HepG2 (cell line): ENCODE measurements at regions of chr5 and their contacts with region 1.

Region 1: GRCh38 chr5:132495667-132496190 is 5.2 kb upstream of the IRF1 start:
- DNase-seq: peak; percentile 85
- ATAC-seq: peak; percentile 81
- H3K4me3 ChIP-seq: peak overlapping the region; percentile 73 to 91 (median 88)
- H3K27ac ChIP-seq: peak overlapping the region; percentile 81
- H3K4me1 ChIP-seq: peaks cover 62% of the 10 kb centered on the region
- H3K27me3 ChIP-seq: no peaks in the 10 kb centered on the region
- CTCF ChIP-seq: peak; percentile 17; the same call in 1 of the 2 replicates
- EP300 ChIP-seq: peak; percentile 6 to 23; a peak in 1 of 4 replicates
- POLR2A ChIP-seq: peak in 1 of 2 experiments; percentile 68; a peak in 2 of 4 replicates
- RAD21 ChIP-seq: peak; percentile 26; the same call in 1 of the 2 replicates

Region 2: DNA sequence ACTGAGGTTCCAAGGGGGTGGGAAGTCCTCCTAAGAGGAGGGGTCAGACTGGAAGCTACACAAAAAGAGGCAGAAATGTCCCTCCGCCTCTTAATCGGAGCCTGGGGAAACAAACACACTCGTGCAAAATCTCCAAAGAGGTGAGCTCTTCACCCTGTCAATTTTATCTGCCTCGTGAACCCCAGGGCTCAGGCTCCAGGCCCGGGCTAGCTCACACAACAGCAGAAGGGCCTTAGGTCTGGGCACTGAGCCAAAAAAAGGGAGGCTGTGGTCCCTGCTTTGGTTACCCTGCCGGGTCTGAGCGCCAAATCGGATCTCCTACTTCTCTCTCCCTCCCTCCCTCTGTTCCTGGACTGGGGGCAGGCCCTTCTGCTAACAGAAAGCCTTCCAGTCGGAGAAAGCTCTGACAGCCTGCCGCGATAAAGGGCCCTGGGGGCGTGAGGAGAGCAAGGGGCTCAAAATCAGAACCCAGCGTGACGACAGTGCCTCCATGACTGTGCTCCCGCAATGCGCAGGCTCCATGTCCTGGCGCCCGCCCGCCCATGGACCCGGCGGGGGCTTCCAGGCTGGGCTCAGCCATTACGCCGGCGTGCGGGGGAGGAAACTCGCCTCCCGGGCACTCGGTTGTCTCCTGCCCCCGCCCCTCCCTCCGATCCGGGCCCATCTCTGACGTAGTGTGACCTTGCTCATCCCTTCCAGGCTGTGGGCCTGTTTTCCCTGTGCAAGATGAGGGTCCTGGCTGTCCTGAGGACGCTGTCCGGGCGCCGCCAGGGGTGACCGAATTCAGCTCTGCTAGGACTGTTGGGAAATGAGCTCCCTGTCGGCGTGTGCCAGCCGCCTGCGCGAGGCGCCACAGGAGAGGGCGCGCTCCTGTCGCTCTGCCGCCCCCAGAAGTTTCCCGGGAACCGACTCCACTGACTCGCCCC is 202.4 kb before region 1 on chr5:
- CTCF ChIA-PET with region 1: no interaction called
- POLR2A ChIA-PET with region 1: interaction called, 16 read pairs
- in situ Hi-C with region 1: loop called (anchors 10 kb)
- intact Hi-C with region 1: no loop called
- DNase-seq: peak; percentile 82
- ATAC-seq: peak; percentile 84
- H3K4me3 ChIP-seq: peak overlapping the region; percentile 51 to 79 (median 55)
- H3K27ac ChIP-seq: peak overlapping the region; percentile 92
- H3K4me1 ChIP-seq: peaks cover 27% of the 10 kb centered on the region
- H3K27me3 ChIP-seq: no peaks in the 10 kb centered on the region; a peak in 2 of 5 replicates
- CTCF ChIP-seq: peak; percentile 43
- EP300 ChIP-seq: no peak
- POLR2A ChIP-seq: peak; percentile 57 to 79
- RAD21 ChIP-seq: no peak; the same call in 1 of the 2 replicates

Region 3: GRCh38 chr5:132354381-132355139 is 141.2 kb before region 1 on chr5:
- CTCF ChIA-PET with region 1: no interaction called
- POLR2A ChIA-PET with region 1: no interaction called
- in situ Hi-C with region 1: no loop called
- intact Hi-C with region 1: no loop called
- DNase-seq: no peak
- ATAC-seq: no peak
- H3K4me3 ChIP-seq: no peak overlapping the region
- H3K27ac ChIP-seq: no peak overlapping the region
- H3K4me1 ChIP-seq: peaks cover 8% of the 10 kb centered on the region; the same call in 1 of the 2 replicates
- H3K27me3 ChIP-seq: no peaks in the 10 kb centered on the region
- CTCF ChIP-seq: no peak
- EP300 ChIP-seq: no peak
- POLR2A ChIP-seq: no peak
- RAD21 ChIP-seq: no peak

Region 4: DNA sequence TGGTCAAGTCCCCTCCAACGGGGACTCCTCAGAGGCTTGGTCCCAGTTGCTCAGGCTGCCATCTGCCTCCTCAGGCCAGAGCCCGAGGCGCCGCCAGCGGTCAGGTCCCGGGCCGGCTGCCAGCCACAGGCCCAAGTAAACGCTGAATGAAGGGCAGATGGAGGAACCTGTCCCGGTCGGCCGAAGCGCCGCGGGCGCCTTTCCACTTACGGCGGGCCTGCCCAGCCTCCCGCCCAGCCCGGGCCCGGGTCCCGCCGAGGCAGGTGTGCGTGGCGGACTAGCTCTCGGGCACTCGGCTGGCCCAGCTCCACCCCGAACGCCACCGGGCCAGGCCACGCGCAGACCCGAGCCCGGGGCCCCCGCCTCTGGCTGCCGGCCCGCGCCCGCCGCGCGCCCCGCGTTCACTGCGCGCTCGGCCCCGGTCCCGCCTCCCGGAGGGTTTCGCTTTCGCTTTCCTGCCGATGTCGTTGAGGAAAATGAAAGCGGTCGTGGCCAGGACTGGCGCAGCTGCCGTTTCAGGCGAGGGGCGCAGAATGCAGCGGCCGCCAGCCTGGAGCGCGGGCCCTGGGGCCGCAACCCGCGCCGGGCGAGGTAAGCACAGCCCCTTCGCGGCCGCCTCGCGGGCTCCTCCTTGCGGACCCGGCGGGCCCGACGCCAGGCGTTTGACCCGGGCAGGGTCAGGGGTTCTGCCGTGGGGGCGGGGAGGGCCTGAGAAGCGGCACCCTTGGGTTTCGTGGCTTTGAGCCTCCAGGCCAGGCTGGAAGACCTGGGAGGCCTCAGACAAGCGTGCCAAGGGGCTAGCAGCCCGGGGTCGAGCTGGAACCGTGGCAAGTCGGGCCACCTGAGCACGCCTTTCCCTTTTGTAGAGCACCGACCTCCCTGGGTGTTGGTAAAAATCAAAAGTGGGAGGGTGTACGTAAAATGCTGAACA is 85.0 kb before region 1 on chr5:
- CTCF ChIA-PET with region 1: no interaction called
- POLR2A ChIA-PET with region 1: interaction called, 31 read pairs
- in situ Hi-C with region 1: no loop called
- intact Hi-C with region 1: no loop called
- DNase-seq: peak; percentile 60
- ATAC-seq: peak; percentile 93
- H3K4me3 ChIP-seq: peak overlapping the region; percentile 63 to 81 (median 74)
- H3K27ac ChIP-seq: peak overlapping the region; percentile 88
- H3K4me1 ChIP-seq: peaks cover 67% of the 10 kb centered on the region
- H3K27me3 ChIP-seq: no peaks in the 10 kb centered on the region; a peak in 1 of 5 replicates
- CTCF ChIP-seq: peak; percentile 80
- EP300 ChIP-seq: peak in 1 of 2 experiments; percentile 24; a peak in 1 of 4 replicates
- POLR2A ChIP-seq: peak; percentile 70 to 77
- RAD21 ChIP-seq: peak; percentile 91

Region 5: DNA sequence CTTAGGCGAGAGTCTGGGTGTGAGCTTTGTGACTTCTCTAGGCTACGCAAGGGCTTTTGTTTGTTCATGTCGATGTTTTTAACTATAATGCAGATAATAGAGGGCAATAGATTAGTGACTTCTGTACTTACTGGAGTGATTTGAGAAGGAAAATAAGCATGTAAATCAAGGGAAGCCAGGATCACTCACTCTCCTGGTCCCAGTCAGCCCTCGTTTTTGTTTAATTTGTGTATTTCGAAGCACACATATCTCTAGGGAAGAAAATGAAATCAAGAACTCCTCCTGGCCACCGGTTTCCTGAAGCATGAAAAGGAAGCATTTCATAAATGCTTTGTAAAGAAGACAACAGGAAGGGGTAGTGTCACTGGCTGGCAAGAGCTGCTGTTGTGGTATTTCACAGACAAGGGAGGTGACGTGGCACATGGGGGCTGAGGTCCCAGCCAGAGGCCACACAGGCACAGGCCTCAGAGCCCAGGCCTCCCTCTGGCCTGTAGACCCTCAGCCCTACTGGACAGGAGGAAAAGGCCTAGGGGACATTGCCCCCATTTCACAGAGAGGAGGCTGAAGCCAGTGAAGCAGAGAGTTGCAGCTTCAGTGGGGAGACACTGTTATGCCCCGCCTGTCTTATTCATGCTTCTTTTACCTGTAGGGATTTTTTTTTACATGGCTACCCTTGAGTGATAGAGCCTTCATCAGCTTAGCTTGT is 39.3 kb before region 1 on chr5:
- CTCF ChIA-PET with region 1: no interaction called
- POLR2A ChIA-PET with region 1: interaction called, 59 read pairs
- in situ Hi-C with region 1: no loop called
- intact Hi-C with region 1: loop called (anchors 5 kb)
- DNase-seq: no peak
- ATAC-seq: peak; percentile 44
- H3K4me3 ChIP-seq: peak overlapping the region in 2 of 3 experiments; percentile 9 to 39; a peak in 1 of 6 replicates
- H3K27ac ChIP-seq: peak overlapping the region; percentile 37
- H3K4me1 ChIP-seq: peaks cover 68% of the 10 kb centered on the region
- H3K27me3 ChIP-seq: no peaks in the 10 kb centered on the region; a peak in 1 of 5 replicates
- CTCF ChIP-seq: no peak
- EP300 ChIP-seq: no peak
- POLR2A ChIP-seq: no peak
- RAD21 ChIP-seq: no peak

Region 6: DNA sequence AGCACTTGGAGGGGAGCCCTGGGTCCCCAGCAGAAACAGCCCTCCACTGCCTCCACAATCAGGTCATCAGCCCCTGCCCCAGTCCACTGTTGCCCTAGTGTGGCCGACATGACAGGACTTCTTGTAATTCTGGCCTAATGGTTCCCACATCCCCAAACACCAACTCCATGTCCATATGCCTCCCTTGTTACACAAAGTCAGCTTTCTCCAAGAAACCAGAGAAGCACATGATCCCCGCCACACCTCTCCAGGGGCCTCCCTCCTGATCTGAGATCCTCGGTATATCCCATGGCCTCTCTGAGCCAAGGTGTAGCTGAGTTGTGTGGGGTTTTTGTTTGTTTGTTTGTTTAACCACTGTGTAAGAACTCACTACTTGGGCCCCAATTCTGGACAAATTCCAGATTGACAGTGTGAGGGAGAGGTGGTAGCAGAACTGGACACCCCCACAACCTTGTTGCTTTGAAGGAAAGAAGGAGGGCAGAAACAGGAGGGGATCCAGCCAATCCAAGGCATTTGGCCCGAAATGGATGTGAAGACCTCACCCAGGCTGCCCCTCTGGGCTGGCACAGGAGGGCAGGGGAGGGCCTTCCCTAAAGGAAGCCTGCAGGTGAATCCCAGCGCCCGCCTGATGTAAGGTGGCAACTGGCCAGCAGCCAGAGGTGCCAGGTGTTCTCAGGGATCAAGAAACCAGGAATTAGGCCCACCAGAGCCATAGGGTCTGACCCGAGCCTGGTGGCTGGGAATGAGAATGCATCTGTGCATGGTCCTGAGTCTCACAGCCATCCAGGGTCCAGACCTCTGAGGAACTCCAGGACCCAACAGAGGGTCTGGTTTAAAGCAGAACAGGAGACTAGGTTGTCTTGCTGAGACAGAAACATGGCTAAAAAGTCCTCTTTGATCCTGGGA is 18.6 kb before region 1 on chr5:
- CTCF ChIA-PET with region 1: no interaction called
- POLR2A ChIA-PET with region 1: interaction called, 99 read pairs
- in situ Hi-C with region 1: no loop called
- intact Hi-C with region 1: loop called (anchors 2 kb)
- DNase-seq: no peak
- ATAC-seq: peak; percentile 66
- H3K4me3 ChIP-seq: no peak overlapping the region
- H3K27ac ChIP-seq: peak overlapping the region; percentile 12
- H3K4me1 ChIP-seq: peaks cover 61% of the 10 kb centered on the region
- H3K27me3 ChIP-seq: no peaks in the 10 kb centered on the region
- CTCF ChIP-seq: no peak
- EP300 ChIP-seq: no peak
- POLR2A ChIP-seq: no peak
- RAD21 ChIP-seq: peak; percentile 29; the same call in 1 of the 2 replicates

Region 7: DNA sequence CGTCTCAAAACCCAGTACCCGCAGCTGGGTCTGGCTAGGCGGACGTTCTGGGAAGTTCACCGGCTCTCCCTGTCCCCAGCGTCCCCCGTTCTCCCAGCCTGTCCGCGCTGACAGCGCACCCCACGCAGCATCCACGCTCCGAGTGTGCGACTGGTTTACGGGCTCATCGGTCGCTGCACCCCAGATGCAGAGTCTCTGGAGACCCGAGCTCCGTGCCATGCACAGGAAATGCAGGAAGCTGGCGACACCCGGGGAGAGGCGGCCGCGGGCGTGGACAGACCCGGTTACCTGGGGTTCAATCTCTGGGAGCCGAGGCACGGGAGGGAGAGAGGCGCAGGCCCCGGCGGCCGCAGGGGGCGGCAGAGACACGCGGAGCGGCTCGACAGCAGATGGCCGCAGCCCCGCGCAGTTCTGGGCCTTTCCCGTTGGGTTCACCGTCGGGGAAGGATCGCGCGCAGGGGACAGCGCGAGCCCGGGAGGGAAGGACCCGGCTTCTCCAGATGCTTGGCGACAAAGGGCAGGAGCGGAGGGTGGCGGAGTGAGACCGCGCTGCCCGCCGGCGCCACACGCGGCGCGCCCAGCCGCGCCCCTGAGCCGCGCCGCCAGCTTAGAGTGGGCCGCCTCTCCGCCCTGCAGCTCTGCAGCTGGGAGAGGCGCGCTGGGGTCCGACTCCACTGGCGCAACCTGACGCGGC is 334.2 kb after region 1 on chr5:
- CTCF ChIA-PET with region 1: no interaction called
- POLR2A ChIA-PET with region 1: no interaction called
- in situ Hi-C with region 1: no loop called
- intact Hi-C with region 1: no loop called
- DNase-seq: peak; percentile 56
- ATAC-seq: peak; percentile 87
- H3K4me3 ChIP-seq: peak overlapping the region; percentile 79 to 94 (median 93)
- H3K27ac ChIP-seq: peak overlapping the region; percentile 90
- H3K4me1 ChIP-seq: peaks cover 61% of the 10 kb centered on the region
- H3K27me3 ChIP-seq: no peaks in the 10 kb centered on the region
- CTCF ChIP-seq: peak; percentile 96
- EP300 ChIP-seq: no peak; a peak in 1 of 4 replicates
- POLR2A ChIP-seq: peak in 1 of 2 experiments; percentile 47; a peak in 1 of 4 replicates
- RAD21 ChIP-seq: peak; percentile 98